ENCODE measurements at regions of chr3 and their contacts with region 1.

Region 1: GRCh38 chr3:129316131-129317013 is 37.7 kb downstream of the HMCES start:
- DNase-seq: peak; percentile 90
- H3K4me3 Mint-ChIP-seq: peak overlapping the region; percentile 95
- H3K27ac Mint-ChIP-seq: peak overlapping the region; percentile 79
- H3K4me1 Mint-ChIP-seq: peaks cover 34% of the 10 kb centered on the region
- H3K27me3 Mint-ChIP-seq: no peaks in the 10 kb centered on the region

Region 2: GRCh38 chr3:128993461-128994173 is 322.8 kb before region 1 on chr3 and contains the start of gene CFAP92:
- CTCF ChIA-PET with region 1: no interaction called
- POLR2A ChIA-PET with region 1: interaction called, 12 read pairs
- DNase-seq: peak; percentile 94
- H3K4me3 Mint-ChIP-seq: peak within 1 kb of the TSS; percentile 32
- H3K27ac Mint-ChIP-seq: no peak within 1 kb of the TSS
- H3K4me1 Mint-ChIP-seq: peaks cover 14% of the 10 kb centered on the region
- H3K27me3 Mint-ChIP-seq: peaks cover 13% of the 10 kb centered on the region
- total RNA-seq, gene CFAP92: 0.15 TPM in 1 of 2 experiments, not detected in the other

Region 3: GRCh38 chr3:129183569-129184395 is 132.6 kb before region 1 on chr3 and contains the start of gene CNBP:
- CTCF ChIA-PET with region 1: interaction called, 3 read pairs
- POLR2A ChIA-PET with region 1: interaction called, 32 read pairs
- DNase-seq: peak; percentile 93
- H3K4me3 Mint-ChIP-seq: peak within 1 kb of the TSS; percentile 94
- H3K27ac Mint-ChIP-seq: peak within 1 kb of the TSS; percentile 93
- H3K4me1 Mint-ChIP-seq: peaks cover 48% of the 10 kb centered on the region
- H3K27me3 Mint-ChIP-seq: no peaks in the 10 kb centered on the region
- total RNA-seq, gene CNBP: 321 to 322 TPM

Region 4: GRCh38 chr3:129278439-129278970 is 37.9 kb before region 1 on chr3 and contains the start of gene HMCES:
- CTCF ChIA-PET with region 1: interaction called, 17 read pairs
- POLR2A ChIA-PET with region 1: interaction called, 197 read pairs
- DNase-seq: peak; percentile 94
- H3K4me3 Mint-ChIP-seq: peak within 1 kb of the TSS; percentile 97
- H3K27ac Mint-ChIP-seq: peak within 1 kb of the TSS; percentile 91
- H3K4me1 Mint-ChIP-seq: peaks cover 51% of the 10 kb centered on the region
- H3K27me3 Mint-ChIP-seq: no peaks in the 10 kb centered on the region
- total RNA-seq, gene HMCES: 45.7 to 50.1 TPM

Region 5: GRCh38 chr3:129336093-129336709 is 19.8 kb after region 1 on chr3:
- CTCF ChIA-PET with region 1: no interaction called
- POLR2A ChIA-PET with region 1: interaction called, 11 read pairs
- DNase-seq: no peak
- H3K4me3 Mint-ChIP-seq: no peak overlapping the region
- H3K27ac Mint-ChIP-seq: no peak overlapping the region
- H3K4me1 Mint-ChIP-seq: no peaks in the 10 kb centered on the region
- H3K27me3 Mint-ChIP-seq: peaks cover 5% of the 10 kb centered on the region

Region 6: GRCh38 chr3:129822679-129823078 is 506.3 kb after region 1 on chr3:
- CTCF ChIA-PET with region 1: no interaction called
- POLR2A ChIA-PET with region 1: no interaction called
- DNase-seq: no peak
- H3K4me3 Mint-ChIP-seq: no peak overlapping the region
- H3K27ac Mint-ChIP-seq: no peak overlapping the region
- H3K4me1 Mint-ChIP-seq: peaks cover 15% of the 10 kb centered on the region
- H3K27me3 Mint-ChIP-seq: no peaks in the 10 kb centered on the region

Measured in activated CD4-positive, alpha-beta memory T cell treated with anti-CD3 and anti-CD28 coated beads, Interleukin-2, amount 10 ng/mL, durations not matched to agents 7 days and 5 days (primary cell).